ENCODE measurements at regions of chr12 and their contacts with region 1.

Region 1: GRCh38 chr12:58540480-58541299 is 379.6 kb downstream of the LRIG3 start:
- DNase-seq: peak; percentile 89
- H3K4me3 ChIP-seq: no peak overlapping the region
- H3K27ac ChIP-seq: no peak overlapping the region
- H3K4me1 ChIP-seq: no peaks in the 10 kb centered on the region
- H3K27me3 ChIP-seq: no peaks in the 10 kb centered on the region
- CTCF ChIP-seq: peak; percentile 87

Region 2: DNA sequence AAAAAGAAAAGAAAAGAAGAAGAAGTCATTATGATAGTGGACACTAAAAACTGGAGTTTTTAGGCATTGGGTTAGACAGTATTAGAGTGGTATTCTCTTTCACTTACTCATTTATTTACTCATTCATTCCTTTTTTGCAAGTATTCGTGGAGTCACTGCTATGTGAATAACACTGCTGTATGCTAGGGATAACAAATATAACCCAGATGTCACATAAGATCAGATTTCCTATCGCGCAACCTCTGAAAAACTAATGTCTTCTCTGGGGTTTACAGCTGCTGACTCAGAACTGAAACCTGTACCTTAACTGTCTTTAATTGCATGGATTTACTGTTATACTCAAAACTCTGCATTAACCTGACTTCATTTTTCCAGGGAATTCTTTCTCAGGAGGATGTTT is 25.9 kb after region 1 on chr12:
- CTCF ChIA-PET with region 1: no interaction called
- POLR2A ChIA-PET with region 1: no interaction called
- intact Hi-C with region 1: no loop called
- DNase-seq: no peak
- H3K4me3 ChIP-seq: no peak overlapping the region
- H3K27ac ChIP-seq: no peak overlapping the region
- H3K4me1 ChIP-seq: no peaks in the 10 kb centered on the region
- H3K27me3 ChIP-seq: no peaks in the 10 kb centered on the region
- CTCF ChIP-seq: no peak

Region 3: DNA sequence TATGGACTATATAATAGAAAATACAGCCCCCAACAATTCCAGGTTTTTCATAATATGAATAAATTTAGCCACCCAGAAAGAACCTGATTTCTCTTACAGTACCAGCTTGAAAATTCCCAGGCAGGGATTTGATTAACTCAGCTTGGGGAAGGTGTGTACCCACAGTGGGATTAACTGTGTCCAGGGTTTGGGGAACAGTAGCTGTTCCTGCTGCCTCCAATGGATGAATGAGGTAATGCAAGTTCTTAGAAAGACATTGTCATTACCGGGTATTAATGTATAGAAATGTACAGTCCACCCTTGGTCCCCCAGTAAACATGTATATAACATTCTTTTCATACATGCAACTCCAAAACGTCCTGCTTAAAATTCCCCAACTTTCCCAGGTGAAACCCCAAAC is 264.1 kb after region 1 on chr12:
- CTCF ChIA-PET with region 1: no interaction called
- POLR2A ChIA-PET with region 1: no interaction called
- intact Hi-C with region 1: loop called (anchors 5 kb)
- DNase-seq: peak; percentile 34
- H3K4me3 ChIP-seq: no peak overlapping the region
- H3K27ac ChIP-seq: no peak overlapping the region
- H3K4me1 ChIP-seq: no peaks in the 10 kb centered on the region
- H3K27me3 ChIP-seq: no peaks in the 10 kb centered on the region
- CTCF ChIP-seq: peak; percentile 58

Region 4: GRCh38 chr12:58919231-58920101 is 378.8 kb after region 1 on chr12:
- CTCF ChIA-PET with region 1: interaction called, 3 read pairs
- POLR2A ChIA-PET with region 1: no interaction called
- intact Hi-C with region 1: loop called (anchors 5 kb)
- DNase-seq: peak; percentile 68
- H3K4me3 ChIP-seq: peak overlapping the region; percentile 67
- H3K27ac ChIP-seq: peak overlapping the region; percentile 77
- H3K4me1 ChIP-seq: peaks cover 30% of the 10 kb centered on the region
- H3K27me3 ChIP-seq: no peaks in the 10 kb centered on the region
- CTCF ChIP-seq: no peak

Region 5: DNA sequence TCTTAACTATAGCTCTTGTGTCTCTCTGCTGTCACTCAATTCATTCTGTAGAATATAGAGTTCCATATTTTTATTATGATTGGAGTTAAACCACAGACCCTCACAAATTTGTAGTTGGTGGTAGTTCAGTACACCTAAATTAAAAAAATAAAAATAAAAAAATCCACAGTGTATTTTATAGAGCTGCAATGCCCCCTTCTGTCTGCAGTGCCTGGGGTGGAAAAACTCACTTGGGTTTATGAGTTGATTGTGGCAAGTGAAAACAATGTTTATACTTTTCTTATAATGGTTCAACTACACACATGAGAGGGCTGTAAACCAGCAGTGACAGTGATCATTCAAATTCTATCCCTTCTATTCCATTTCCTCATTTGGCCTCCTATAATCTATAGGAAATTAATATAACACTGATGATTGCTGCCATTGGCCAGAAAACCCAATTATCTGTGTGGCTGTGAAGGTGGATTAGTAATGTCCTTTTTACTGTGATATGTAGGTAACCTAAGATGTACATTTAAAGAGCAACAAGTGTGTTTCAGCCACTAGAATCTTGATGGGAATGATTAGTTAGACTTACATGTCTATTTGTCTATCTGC is 546.5 kb after region 1 on chr12:
- CTCF ChIA-PET with region 1: no interaction called
- POLR2A ChIA-PET with region 1: no interaction called
- intact Hi-C with region 1: loop called (anchors 5 kb)
- DNase-seq: no peak
- H3K4me3 ChIP-seq: no peak overlapping the region
- H3K27ac ChIP-seq: no peak overlapping the region
- H3K4me1 ChIP-seq: peaks cover 18% of the 10 kb centered on the region
- H3K27me3 ChIP-seq: no peaks in the 10 kb centered on the region
- CTCF ChIP-seq: peak; percentile 54

Measured in A673 (cell line).